CD4-positive, alpha-beta memory T cell (primary cell): ENCODE measurements at regions of chr2 and their contacts with region 1.

Region 1: DNA sequence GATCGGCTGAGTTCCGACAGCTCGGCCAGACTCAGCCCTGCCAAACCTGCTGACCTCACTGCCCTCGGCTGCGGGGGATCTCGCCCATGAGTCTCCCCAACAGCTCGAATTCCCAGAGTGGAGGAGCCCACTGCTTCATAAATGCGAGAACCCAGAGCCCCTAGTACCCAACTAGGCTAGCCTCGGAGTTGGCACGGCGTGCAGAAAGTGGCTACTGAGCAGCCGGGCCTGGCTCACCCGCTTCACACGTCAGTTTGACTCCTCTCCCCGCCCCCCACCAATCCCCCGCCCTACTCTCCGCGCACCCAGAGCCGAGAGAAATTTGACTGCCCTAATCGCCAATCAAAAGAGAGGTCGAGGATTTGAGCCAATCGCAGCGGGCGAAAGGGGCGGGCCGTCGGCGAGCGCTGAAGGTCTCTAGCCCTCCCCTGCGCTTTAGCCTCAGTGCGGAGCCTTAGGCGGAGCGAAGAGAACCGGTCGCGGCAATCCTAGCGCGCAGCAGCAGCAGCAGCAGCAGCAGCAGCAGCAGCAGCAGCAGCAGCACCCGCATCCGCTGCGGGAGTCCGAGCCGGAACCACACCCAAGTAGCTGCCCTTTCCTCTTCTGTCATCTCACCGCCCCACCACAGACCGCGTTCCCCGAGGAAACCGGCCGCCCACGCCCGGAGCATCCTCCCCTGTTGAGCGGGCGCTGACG is at the start of gene GLS:
- DNase-seq: peak; percentile 94 to 98 (median 97)
- H3K4me3 ChIP-seq: peak within 1 kb of the TSS; percentile 88 to 94
- H3K4me3 Mint-ChIP-seq: peak within 1 kb of the TSS; percentile 96 to 99 (median 98)
- H3K27ac ChIP-seq: peak within 1 kb of the TSS; percentile 93
- H3K27ac Mint-ChIP-seq: peak within 1 kb of the TSS; percentile 96 to 99 (median 99)
- H3K4me1 ChIP-seq: peaks cover 54% of the 10 kb centered on the region
- H3K4me1 Mint-ChIP-seq: peaks cover 33 to 72% (median 45%) of the 10 kb centered on the region in 4 donors
- H3K27me3 ChIP-seq: no peaks in the 10 kb centered on the region
- H3K27me3 Mint-ChIP-seq: no peaks in the 10 kb centered on the region
- total RNA-seq, gene GLS: 200 to 208 TPM

Region 2: GRCh38 chr2:189783927-189784867 is 1096.3 kb before region 1 on chr2 and contains the starts of genes ORMDL1 and PMS1:
- CTCF ChIA-PET with region 1: no interaction called
- POLR2A ChIA-PET with region 1: no interaction called
- intact Hi-C with region 1: loop called (anchors 5 kb)
- DNase-seq: peak; percentile 93 to 96 (median 96)
- H3K4me3 ChIP-seq: peak within 1 kb of the TSS; percentile 71 to 74
- H3K4me3 Mint-ChIP-seq: peak within 1 kb of the TSS; percentile 92 to 97 (median 94)
- H3K27ac ChIP-seq: peak within 1 kb of the TSS; percentile 93
- H3K27ac Mint-ChIP-seq: peak within 1 kb of the TSS; percentile 96 to 97 (median 97)
- H3K4me1 ChIP-seq: peaks cover 52% of the 10 kb centered on the region
- H3K4me1 Mint-ChIP-seq: peaks cover 43 to 64% (median 54%) of the 10 kb centered on the region in 4 donors
- H3K27me3 ChIP-seq: no peaks in the 10 kb centered on the region
- H3K27me3 Mint-ChIP-seq: no peaks in the 10 kb centered on the region
- total RNA-seq, gene ORMDL1: 187 to 190 TPM
- total RNA-seq, gene PMS1: 29.1 to 35.1 TPM

Region 3: DNA sequence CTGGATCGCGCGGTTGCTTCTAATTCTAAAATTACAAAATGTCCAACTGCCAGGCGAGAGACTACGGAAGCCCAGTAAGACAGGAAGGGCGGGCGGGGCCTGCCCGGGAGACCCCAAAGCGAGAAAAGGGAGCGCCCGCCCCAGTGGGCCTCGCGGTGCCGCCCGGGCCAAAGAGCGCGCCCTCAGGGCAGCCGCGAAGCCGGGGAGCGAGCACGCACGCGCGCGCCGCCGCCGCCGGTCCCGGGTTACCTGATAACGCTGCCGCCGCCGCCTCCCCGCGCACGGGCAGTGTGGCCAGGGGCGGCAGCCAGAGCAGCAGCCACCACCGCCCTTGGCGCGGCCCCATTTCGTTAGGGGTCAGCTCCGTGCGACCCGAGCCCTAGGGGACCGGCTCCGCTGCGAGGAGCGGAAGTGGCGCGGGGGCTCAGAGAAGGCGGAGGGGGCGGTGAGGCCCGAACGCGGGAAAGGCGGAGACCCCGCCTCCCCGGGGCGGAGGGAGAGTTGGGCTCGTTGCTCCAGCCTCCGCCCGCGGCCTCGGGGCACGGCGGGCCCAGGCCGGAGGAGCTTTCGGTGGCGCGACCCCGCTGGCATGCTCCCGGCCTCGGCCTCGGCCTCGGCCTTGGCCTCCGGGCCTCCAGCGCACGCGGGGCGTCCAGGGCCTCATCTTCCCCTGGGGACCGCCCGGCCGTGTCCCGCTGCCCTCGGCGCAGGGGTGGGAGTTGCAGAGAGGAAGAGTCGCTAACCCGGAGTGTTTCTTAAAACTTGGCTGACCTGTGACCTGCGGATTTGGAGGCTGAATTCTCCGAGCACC is 346.0 kb before region 1 on chr2 and contains the start of gene NEMP2:
- CTCF ChIA-PET with region 1: no interaction called
- POLR2A ChIA-PET with region 1: interaction called, 24 read pairs
- intact Hi-C with region 1: loop called (anchors 5 kb)
- DNase-seq: peak; percentile 75 to 87 (median 81)
- H3K4me3 ChIP-seq: peak within 1 kb of the TSS; percentile 82 to 89
- H3K4me3 Mint-ChIP-seq: peak within 1 kb of the TSS; percentile 94 to 99 (median 98)
- H3K27ac ChIP-seq: peak within 1 kb of the TSS; percentile 87
- H3K27ac Mint-ChIP-seq: peak within 1 kb of the TSS; percentile 99 to 100 (median 100)
- H3K4me1 ChIP-seq: peaks cover 46% of the 10 kb centered on the region
- H3K4me1 Mint-ChIP-seq: peaks cover 42 to 66% (median 52%) of the 10 kb centered on the region in 4 donors
- H3K27me3 ChIP-seq: no peaks in the 10 kb centered on the region
- H3K27me3 Mint-ChIP-seq: no peaks in the 10 kb centered on the region
- total RNA-seq, gene NEMP2: 20.7 to 21.2 TPM

Region 4: DNA sequence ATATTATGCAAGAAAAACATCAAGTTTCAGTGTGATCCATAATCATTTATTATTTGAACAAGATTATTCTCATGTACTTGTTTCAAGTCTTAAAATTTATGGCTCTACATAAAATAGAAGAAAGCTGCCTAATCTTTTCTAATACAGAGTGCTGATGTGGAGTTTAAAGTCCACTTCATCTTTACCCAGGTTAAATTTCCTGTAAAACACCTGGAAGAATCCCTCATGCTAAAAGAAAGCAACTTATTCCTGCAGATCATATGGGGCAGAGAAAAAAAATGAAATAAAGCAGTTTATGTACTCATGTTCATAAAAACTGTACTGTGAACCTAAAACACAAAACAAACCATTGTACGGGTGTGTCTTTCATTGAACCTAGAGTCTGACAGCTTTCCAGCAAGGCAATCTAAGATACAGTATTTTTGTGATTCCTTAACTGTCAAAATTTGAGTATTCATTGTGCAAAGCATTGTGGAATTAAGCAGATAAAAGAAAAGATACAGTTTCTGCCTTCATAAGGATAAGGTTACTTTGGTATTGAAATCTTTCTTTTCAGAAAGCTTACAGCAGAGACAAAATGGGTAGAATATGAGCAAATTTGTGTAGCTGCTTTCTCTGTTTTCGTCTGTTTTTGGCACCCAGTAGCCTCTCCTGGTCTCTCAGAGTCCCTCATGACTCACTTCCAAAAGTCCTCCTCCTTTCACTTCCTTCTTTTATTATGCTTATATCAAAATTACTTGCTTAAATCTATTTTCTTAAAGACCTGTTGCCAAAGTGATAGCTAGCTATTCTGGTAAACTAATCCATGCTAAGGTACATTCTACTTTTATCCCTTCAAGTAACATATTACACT is 26.8 kb before region 1 on chr2:
- CTCF ChIA-PET with region 1: interaction called, 83 read pairs
- POLR2A ChIA-PET with region 1: interaction called, 54 read pairs
- intact Hi-C with region 1: loop called (anchors 1 kb)
- DNase-seq: no peak
- H3K4me3 ChIP-seq: no peak overlapping the region
- H3K4me3 Mint-ChIP-seq: no peak overlapping the region
- H3K27ac ChIP-seq: no peak overlapping the region
- H3K27ac Mint-ChIP-seq: no peak overlapping the region
- H3K4me1 ChIP-seq: no peaks in the 10 kb centered on the region
- H3K4me1 Mint-ChIP-seq: peaks cover 0 to 2% (median 0%) of the 10 kb centered on the region in 4 donors
- H3K27me3 ChIP-seq: no peaks in the 10 kb centered on the region
- H3K27me3 Mint-ChIP-seq: peaks cover 0 to 1% of the 10 kb centered on the region in 2 donors

Region 5: GRCh38 chr2:190863946-190864345 is 16.6 kb before region 1 on chr2:
- CTCF ChIA-PET with region 1: interaction called, 5 read pairs
- POLR2A ChIA-PET with region 1: interaction called, 48 read pairs
- intact Hi-C with region 1: no loop called
- DNase-seq: no peak
- H3K4me3 ChIP-seq: no peak overlapping the region
- H3K4me3 Mint-ChIP-seq: peak overlapping the region in 2 of 8 donors; percentile 5 to 6
- H3K27ac ChIP-seq: no peak overlapping the region
- H3K27ac Mint-ChIP-seq: peak overlapping the region in 2 of 7 donors; percentile 20 to 26
- H3K4me1 ChIP-seq: peaks cover 16% of the 10 kb centered on the region
- H3K4me1 Mint-ChIP-seq: peaks cover 14 to 25% (median 20%) of the 10 kb centered on the region in 4 donors
- H3K27me3 ChIP-seq: no peaks in the 10 kb centered on the region
- H3K27me3 Mint-ChIP-seq: no peaks in the 10 kb centered on the region

Region 6: DNA sequence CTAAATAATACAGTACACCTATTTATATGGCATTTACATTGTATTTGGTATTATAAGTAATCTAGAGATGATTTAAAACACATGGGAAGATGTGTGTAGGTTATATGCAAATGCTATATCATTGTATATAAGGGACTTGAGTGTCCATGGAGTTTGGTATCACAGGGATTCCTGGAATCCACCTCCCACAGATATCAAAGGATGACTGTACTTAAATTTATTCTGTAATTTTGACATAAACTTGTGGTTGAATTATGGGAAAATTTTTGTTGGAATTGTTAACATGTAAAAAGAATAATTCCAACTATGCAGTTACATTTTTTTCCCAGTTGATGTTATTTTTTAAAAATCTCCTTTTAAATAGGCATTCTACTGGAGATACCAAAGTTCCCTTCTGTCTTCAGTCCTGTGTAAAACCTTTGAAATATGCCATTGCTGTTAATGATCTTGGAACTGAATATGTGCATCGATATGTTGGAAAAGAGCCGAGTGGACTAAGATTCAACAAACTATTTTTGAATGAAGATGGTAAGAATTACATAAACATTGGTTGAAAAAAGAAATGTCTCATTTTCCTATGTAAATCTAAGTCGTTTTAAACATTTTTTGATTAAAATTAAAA is 24.2 kb after region 1 on chr2:
- CTCF ChIA-PET with region 1: interaction called, 3 read pairs
- POLR2A ChIA-PET with region 1: interaction called, 8 read pairs
- intact Hi-C with region 1: loop called (anchors 2 kb)
- DNase-seq: no peak
- H3K4me3 ChIP-seq: no peak overlapping the region
- H3K4me3 Mint-ChIP-seq: no peak overlapping the region
- H3K27ac ChIP-seq: no peak overlapping the region
- H3K27ac Mint-ChIP-seq: peak overlapping the region in 2 of 7 donors; percentile 64 to 66
- H3K4me1 ChIP-seq: no peaks in the 10 kb centered on the region
- H3K4me1 Mint-ChIP-seq: peaks cover 15 to 19% (median 18%) of the 10 kb centered on the region in 4 donors
- H3K27me3 ChIP-seq: no peaks in the 10 kb centered on the region
- H3K27me3 Mint-ChIP-seq: no peaks in the 10 kb centered on the region

Region 7: DNA sequence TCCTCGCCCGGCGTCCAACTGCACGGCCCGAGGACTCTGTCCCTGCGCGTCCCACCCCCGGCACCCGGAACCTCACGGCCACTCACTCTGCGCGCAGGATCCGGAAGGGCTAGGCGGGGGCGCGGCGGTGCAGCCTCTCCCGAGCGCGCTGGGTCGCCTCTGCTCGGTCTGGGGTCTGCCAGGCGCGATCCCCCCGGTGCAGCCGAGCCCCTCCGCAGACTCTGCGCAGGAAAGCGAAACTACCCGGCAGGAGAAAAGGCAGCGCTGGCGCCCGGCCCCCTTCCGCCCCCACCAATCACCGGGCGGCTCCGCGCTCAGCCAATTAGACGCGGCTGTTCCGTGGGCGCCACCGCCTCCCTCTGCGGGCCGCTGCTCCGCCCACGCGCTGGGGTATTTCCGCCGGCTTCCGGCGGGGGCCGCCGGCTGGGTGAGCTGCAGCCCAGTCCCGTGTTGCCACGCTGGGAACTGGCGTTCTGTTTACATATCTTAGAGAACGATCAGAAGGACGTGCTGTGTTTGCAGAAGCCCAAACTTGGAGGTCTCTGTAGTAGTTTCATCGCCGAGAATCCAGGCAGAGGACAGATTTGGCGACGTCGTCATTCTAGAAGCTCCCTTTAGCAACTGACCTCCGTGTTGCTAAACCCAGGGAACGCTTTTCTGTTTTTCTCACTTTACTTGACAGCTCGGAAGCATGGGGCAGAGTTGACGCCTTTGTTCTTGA is 133.6 kb after region 1 on chr2 and contains the start of gene STAT1:
- CTCF ChIA-PET with region 1: interaction called, 4 read pairs
- POLR2A ChIA-PET with region 1: interaction called, 68 read pairs
- intact Hi-C with region 1: no loop called
- DNase-seq: peak; percentile 94 to 98 (median 96)
- H3K4me3 ChIP-seq: peak within 1 kb of the TSS; percentile 92 to 95
- H3K4me3 Mint-ChIP-seq: no peak within 1 kb of the TSS
- H3K27ac ChIP-seq: peak within 1 kb of the TSS; percentile 89
- H3K27ac Mint-ChIP-seq: no peak within 1 kb of the TSS
- H3K4me1 ChIP-seq: peaks cover 71% of the 10 kb centered on the region
- H3K4me1 Mint-ChIP-seq: peaks cover 29 to 48% (median 33%) of the 10 kb centered on the region in 4 donors
- H3K27me3 ChIP-seq: no peaks in the 10 kb centered on the region
- H3K27me3 Mint-ChIP-seq: no peaks in the 10 kb centered on the region
- total RNA-seq, gene STAT1: 130 TPM

Region 8: GRCh38 chr2:191321861-191322686 is 441.5 kb after region 1 on chr2:
- CTCF ChIA-PET with region 1: no interaction called
- POLR2A ChIA-PET with region 1: no interaction called
- intact Hi-C with region 1: no loop called
- DNase-seq: peak in 4 of 5 donors; percentile 9 to 28 (median 22)
- H3K4me3 ChIP-seq: no peak overlapping the region
- H3K4me3 Mint-ChIP-seq: peak overlapping the region in 2 of 8 donors; percentile 1 to 6
- H3K27ac ChIP-seq: no peak overlapping the region
- H3K27ac Mint-ChIP-seq: peak overlapping the region in 2 of 7 donors; percentile 21 to 52
- H3K4me1 ChIP-seq: peaks cover 13% of the 10 kb centered on the region
- H3K4me1 Mint-ChIP-seq: peaks cover 12 to 21% (median 13%) of the 10 kb centered on the region in 4 donors
- H3K27me3 ChIP-seq: no peaks in the 10 kb centered on the region
- H3K27me3 Mint-ChIP-seq: peaks cover 4 to 9% of the 10 kb centered on the region in 2 donors

Region 9: GRCh38 chr2:191638079-191638801 is 757.7 kb after region 1 on chr2:
- CTCF ChIA-PET with region 1: no interaction called
- POLR2A ChIA-PET with region 1: no interaction called
- intact Hi-C with region 1: no loop called
- DNase-seq: no peak
- H3K4me3 ChIP-seq: peak overlapping the region; percentile 0 to 7
- H3K4me3 Mint-ChIP-seq: peak overlapping the region; percentile 51 to 80 (median 70)
- H3K27ac ChIP-seq: peak overlapping the region; percentile 36
- H3K27ac Mint-ChIP-seq: peak overlapping the region; percentile 84 to 92 (median 86)
- H3K4me1 ChIP-seq: peaks cover 54% of the 10 kb centered on the region
- H3K4me1 Mint-ChIP-seq: peaks cover 48 to 70% (median 54%) of the 10 kb centered on the region in 4 donors
- H3K27me3 ChIP-seq: no peaks in the 10 kb centered on the region
- H3K27me3 Mint-ChIP-seq: no peaks in the 10 kb centered on the region

Region 10: DNA sequence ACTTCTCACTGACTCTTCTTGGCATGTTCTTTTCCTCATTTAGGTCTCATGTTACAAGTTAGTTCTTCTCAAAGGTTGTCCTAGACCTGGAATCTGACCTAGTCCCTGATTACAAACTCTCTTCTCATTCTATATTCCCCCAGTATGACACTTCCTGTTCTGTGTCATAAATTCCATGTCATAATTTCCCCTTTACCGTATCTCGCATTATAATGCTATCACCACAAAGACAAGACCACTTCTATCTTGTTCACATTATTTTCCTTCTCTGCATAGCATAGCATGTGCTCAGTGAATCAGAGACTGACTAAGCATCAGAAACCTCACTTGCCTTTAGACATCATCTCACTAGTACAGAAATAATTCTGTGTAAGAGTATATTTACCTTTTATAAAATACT is 1030.0 kb after region 1 on chr2:
- CTCF ChIA-PET with region 1: no interaction called
- POLR2A ChIA-PET with region 1: no interaction called
- intact Hi-C with region 1: no loop called
- DNase-seq: no peak
- H3K4me3 ChIP-seq: no peak overlapping the region
- H3K4me3 Mint-ChIP-seq: no peak overlapping the region
- H3K27ac ChIP-seq: no peak overlapping the region
- H3K27ac Mint-ChIP-seq: no peak overlapping the region
- H3K4me1 ChIP-seq: no peaks in the 10 kb centered on the region
- H3K4me1 Mint-ChIP-seq: no peaks in the 10 kb centered on the region
- H3K27me3 ChIP-seq: no peaks in the 10 kb centered on the region
- H3K27me3 Mint-ChIP-seq: peaks cover 9 to 10% of the 10 kb centered on the region in 2 donors